Cardiac septum (tissue), 1 donor: ENCODE measurements at regions of chr3 and their contacts with region 1.

Region 1: GRCh38 chr3:194315088-194315964 is 35.8 kb downstream of the CPN2 start:
- DNase-seq: peak; percentile 92

Region 2: DNA sequence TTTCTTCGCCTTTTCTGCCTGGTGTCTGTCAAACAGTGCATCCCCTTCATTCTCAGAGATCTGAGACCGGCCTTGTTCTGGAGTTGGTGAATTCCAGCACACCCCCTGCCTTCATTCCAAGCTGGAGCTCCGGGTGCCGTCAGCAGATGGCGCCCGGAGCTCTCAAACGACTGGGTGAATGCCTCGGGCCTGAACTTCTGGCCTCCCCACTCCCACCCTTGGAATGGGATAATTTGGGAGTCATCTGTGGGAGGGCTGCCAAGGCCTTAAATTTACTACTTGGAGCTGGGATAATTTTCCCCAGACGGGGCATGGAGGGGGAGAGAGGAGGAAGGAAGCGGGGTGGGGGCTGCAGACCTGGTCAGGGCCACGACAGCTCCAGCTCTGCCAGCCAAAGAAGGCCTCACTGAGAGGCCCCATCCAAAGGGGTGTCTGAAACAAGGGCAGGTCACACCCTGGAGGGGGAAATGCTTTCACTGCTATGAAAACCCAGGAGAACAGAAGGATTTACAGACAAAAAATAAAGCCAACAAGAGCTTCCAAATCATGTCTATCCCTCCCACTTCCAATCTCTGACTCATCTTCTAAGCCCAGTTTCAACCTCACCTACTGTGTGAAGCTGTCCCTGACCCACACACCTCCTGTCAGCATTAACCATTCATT is 534.4 kb before region 1 on chr3:
- intact Hi-C with region 1: loop called (anchors 1 kb)
- DNase-seq: peak; percentile 82

Region 3: DNA sequence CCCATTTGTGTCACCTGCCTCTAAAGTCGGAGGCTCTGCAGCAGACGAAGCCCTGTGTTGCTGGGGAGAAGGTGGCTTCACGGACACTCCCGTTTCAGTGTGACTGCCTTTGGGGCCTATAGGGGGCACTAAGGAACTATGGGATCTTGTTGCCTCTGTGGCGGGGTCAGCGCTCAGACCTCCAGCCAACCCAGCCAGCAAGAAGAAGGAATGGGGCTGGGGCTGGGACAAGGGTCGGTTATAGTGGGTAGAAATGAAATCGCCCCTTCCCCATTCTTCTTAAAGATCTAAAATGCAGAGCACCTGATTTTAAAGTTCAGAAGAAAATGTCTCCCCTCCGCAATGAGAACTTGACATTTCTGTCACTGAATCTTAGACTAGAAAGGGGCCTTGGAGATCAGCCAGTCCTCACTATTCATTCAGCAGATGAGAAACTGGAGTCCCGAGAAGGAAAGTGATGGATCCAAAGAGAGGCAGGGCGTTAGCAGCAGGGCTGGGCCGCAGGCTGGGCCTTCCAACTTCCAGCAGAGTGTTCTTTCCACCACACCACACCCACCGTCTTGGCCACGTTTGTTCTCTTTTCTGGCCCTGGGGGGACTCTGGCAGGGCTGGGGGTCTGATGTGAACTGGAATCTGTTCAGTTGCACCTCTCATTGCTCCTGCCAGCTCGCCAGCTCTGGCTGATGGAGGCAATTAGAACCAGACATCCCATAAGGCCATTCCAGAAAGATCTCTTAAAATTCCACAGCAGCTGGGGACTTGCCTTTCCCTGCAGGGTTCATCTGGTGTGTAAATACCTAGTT is 526.9 kb before region 1 on chr3:
- intact Hi-C with region 1: loop called (anchors 2 kb)
- DNase-seq: no peak

Region 4: GRCh38 chr3:193971261-193971751 is 344.0 kb before region 1 on chr3:
- intact Hi-C with region 1: loop called (anchors 10 kb)
- DNase-seq: no peak

Region 5: DNA sequence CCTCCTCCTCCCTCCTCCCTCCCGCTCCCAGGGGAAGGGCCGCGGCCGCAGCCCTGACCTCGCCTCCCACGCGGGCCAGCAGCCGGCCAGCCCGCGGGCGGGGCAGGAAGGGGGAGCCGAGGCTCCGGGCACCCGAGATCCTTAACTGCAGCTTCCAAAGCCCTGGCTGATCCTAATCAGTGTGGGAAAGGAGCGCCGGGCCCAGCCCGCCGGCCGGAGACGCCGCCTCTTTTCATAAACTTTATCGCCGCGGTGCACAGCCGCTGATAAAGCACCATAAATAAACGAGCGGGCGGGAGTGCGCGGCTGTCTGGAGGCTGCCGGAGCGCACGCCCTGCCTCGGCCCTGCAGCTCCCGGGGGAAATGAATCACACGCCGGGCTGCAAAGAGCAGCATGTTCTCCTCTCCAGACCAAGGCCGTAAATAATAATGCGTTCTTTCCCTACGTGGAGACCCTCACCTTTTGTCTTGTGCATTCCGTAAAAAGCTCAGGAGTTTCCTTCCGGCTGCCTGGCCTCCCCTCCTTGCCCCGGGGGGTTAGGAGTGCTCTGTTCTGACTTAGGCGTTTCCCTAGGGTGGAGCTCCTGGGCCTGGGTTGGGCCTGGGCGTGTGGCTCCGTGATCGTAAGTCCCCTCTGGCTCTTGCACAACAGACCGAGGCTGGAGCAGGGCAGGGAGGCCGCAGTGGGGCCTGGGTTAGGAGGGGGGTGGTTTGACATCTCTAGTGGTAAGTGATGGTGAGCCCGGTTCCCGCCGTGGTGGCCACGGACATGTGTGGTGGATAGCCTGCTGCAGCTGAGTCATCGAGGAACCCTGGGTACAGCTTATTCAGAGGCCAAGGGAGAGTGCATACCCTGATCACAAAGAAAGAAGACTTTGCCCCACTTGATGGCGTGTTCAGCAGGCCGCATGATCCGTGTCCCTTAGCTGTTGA is 311.9 kb before region 1 on chr3:
- intact Hi-C with region 1: loop called (anchors 5 kb)
- DNase-seq: peak; percentile 94

Region 6: GRCh38 chr3:194141415-194142155 is 173.7 kb before region 1 on chr3:
- intact Hi-C with region 1: loop called (anchors 2 kb)
- DNase-seq: peak; percentile 94

Region 7: DNA sequence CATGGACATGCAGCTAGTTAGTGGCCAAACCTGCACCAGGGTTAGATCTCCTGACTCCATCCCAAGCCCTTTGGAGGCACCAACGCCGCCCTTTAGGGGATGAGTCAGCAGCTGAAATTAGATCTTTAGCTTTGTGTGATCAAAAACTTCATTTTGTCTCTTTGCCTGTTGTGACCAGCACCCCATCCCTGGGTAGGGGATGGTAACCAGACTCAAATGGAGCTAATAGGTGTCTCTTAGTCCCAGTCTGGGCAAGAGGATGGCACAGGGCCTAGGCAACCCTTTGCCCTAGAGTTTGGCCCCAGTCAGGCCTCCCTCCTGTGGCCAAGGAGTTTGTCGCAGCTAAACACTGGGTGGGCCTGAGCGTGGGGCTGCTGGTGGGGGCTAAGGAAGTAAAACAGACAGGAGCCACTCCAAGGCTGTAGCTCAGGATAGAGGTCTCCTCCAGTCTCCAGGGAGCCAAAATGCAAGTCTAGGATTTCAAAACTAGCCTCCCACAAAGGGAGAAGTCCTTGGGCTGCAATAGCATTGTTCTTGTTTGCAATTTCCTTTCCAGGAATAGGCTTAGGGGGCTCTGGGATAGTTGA is 69.3 kb before region 1 on chr3:
- intact Hi-C with region 1: no loop called
- DNase-seq: peak; percentile 72

Region 8: DNA sequence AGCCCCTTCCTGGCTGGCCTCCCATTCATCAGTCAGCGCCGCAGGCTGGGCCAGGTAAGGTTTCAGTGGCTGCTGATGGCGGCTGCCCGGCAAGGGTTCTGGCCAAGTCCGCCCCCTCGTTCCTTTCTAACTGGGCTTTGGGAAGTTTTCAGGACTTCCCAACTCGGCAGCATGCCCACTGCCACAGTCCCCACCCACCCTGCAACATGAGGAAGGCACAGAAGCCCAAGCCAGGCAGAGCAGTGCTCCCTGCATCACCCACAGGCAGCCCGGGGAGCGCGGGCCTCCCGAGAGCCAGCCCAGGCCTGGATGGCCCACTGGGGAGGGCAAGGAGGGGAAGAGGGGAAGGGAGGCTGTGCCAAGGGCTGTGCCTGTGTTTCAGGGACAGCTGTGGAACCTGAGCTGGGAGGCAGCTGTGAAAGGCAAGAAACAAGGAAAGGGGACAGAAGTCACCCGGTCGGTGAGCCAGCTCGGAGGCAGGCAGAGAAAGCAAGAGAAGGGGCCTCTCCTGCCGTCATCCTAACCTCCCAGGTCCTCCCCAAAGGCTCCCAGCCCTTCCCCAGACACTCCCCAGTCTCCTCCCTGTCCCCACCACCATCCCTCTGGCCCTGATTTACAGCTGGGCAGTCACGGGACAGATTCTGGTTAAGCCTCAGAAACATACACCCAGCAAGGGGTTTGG is 38.1 kb before region 1 on chr3:
- intact Hi-C with region 1: loop called (anchors 2 kb)
- DNase-seq: peak; percentile 76